ENCODE measurements at regions of chr1 and their contacts with region 1.

Region 1: GRCh38 chr1:35231287-35231686 is 37.2 kb upstream of the ZMYM4 start:
- H3K4me3 ChIP-seq: no peak overlapping the region
- H3K27ac ChIP-seq: no peak overlapping the region
- H3K4me1 ChIP-seq: no peaks in the 10 kb centered on the region
- CTCF ChIP-seq: no peak

Region 2: GRCh38 chr1:35220976-35221375 is 10.3 kb before region 1 on chr1:
- CTCF ChIA-PET with region 1: interaction called, 10 read pairs
- POLR2A ChIA-PET with region 1: no interaction called
- H3K4me3 ChIP-seq: no peak overlapping the region
- H3K27ac ChIP-seq: no peak overlapping the region
- H3K4me1 ChIP-seq: no peaks in the 10 kb centered on the region
- CTCF ChIP-seq: 0 out of 2 replicates have a peak, but pooled peaks have one; percentile 20

Measured in HEK293 (cell line).